ENCODE measurements at regions of chr3 and their contacts with region 1.

Region 1: GRCh38 chr3:53845103-53845880 is 927 bp downstream of the CHDH start:
- DNase-seq: peak; percentile 59 to 77
- ATAC-seq: peak; percentile 74 to 86 (median 78)
- H3K4me3 ChIP-seq: peak overlapping the region; percentile 89
- H3K27ac ChIP-seq: peak overlapping the region; percentile 86
- H3K4me1 ChIP-seq: peaks cover 4% of the 10 kb centered on the region
- H3K27me3 ChIP-seq: no peaks in the 10 kb centered on the region
- CTCF ChIP-seq: peak; percentile 30

Region 2: GRCh38 chr3:53881691-53882593 is 36.6 kb after region 1 on chr3 and contains the start of gene ACTR8:
- intact Hi-C with region 1: loop called in 1 of 2 experiments (anchors 5 kb)
- DNase-seq: peak; percentile 86 to 92
- ATAC-seq: peak; percentile 95 to 99 (median 98)
- H3K4me3 ChIP-seq: peak within 1 kb of the TSS; percentile 89
- H3K27ac ChIP-seq: peak within 1 kb of the TSS; percentile 76
- H3K4me1 ChIP-seq: peaks cover 15% of the 10 kb centered on the region
- H3K27me3 ChIP-seq: no peaks in the 10 kb centered on the region
- CTCF ChIP-seq: peak; percentile 8
- total RNA-seq, gene ACTR8: 14.1 to 24.3 (median 19.6) TPM